Activated T-helper 1 cell treated with anti-CD3 and anti-CD28 coated beads, Interleukin-12 subunit alpha, Interleukin-12 subunit beta, Interleukin-2, Interleukin-4 antibody, amounts not matched to agents 30 ng/mL and 10 ng/mL and 1 ng/mL, durations not matched to agents 14 hours and 24 hours and 36 hours (primary cell): ENCODE measurements at regions of chr16 and their contacts with region 1.

Region 1: GRCh38 chr16:26598061-26598460 is 468.7 kb upstream of the C16orf82 start:
- DNase-seq: peak; percentile 84
- H3K4me3 Mint-ChIP-seq: peak overlapping the region; percentile 48
- H3K27ac Mint-ChIP-seq: peak overlapping the region; percentile 97
- H3K4me1 Mint-ChIP-seq: peaks cover 85% of the 10 kb centered on the region
- H3K27me3 Mint-ChIP-seq: no peaks in the 10 kb centered on the region

Region 2: DNA sequence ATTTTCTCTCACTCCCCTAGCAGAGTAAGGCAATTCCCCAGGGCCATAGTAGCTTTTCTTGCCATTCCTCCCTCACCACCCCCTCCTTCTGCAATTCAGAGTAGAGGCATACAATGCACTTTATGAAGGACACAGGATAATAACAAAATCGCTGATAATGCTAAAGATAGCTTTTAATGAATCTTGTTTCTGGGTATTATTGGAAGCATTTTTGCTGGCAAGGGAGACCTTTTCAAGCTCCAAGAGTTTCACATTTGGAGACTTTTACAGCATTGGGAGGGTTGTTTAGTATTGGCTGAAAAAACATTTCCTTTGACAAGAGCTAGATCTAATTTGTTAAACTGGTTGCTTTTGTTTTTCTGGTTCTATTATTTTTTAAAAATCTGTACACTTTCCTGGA is 104.3 kb before region 1 on chr16:
- intact Hi-C with region 1: no loop called
- DNase-seq: no peak
- H3K4me3 Mint-ChIP-seq: no peak overlapping the region
- H3K27ac Mint-ChIP-seq: no peak overlapping the region
- H3K4me1 Mint-ChIP-seq: peaks cover 7% of the 10 kb centered on the region
- H3K27me3 Mint-ChIP-seq: peaks cover 10% of the 10 kb centered on the region

Region 3: DNA sequence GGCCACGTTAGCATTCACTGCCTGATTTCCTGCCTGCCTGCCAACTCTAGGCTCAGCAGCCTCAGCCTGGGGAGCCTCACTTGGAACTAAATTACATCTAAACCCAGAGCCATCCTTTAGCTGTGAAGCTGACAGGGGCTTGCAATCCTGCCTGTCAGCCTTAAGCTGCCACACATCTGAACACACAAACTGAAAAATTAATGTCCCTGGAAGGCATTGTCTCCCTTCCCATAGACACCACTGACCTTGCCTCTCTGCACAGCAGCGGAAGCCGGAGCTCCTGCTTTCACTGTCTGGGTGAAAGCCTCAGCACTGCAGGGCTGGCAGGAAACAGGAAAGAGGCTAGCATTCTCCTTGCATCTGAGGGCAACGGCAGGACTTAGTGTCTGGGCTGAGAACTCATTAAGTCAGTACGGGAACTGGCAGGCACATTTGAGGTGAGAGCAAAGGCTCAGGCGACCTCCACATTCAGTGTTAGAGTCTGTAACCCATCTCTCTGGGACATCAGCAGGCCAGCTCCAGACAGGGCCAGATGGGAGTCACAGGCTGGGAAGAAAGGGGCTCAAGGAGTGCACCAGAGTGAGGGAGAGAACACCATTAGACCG is 16.3 kb after region 1 on chr16:
- intact Hi-C with region 1: loop called (anchors 2 kb)
- DNase-seq: peak; percentile 38
- H3K4me3 Mint-ChIP-seq: peak overlapping the region; percentile 86
- H3K27ac Mint-ChIP-seq: peak overlapping the region; percentile 91
- H3K4me1 Mint-ChIP-seq: peaks cover 58% of the 10 kb centered on the region
- H3K27me3 Mint-ChIP-seq: peaks cover 4% of the 10 kb centered on the region

Region 4: GRCh38 chr16:26645614-26646013 is 47.6 kb after region 1 on chr16:
- intact Hi-C with region 1: loop called (anchors 2 kb)
- DNase-seq: peak; percentile 57
- H3K4me3 Mint-ChIP-seq: no peak overlapping the region
- H3K27ac Mint-ChIP-seq: no peak overlapping the region
- H3K4me1 Mint-ChIP-seq: peaks cover 59% of the 10 kb centered on the region
- H3K27me3 Mint-ChIP-seq: peaks cover 2% of the 10 kb centered on the region

Region 5: DNA sequence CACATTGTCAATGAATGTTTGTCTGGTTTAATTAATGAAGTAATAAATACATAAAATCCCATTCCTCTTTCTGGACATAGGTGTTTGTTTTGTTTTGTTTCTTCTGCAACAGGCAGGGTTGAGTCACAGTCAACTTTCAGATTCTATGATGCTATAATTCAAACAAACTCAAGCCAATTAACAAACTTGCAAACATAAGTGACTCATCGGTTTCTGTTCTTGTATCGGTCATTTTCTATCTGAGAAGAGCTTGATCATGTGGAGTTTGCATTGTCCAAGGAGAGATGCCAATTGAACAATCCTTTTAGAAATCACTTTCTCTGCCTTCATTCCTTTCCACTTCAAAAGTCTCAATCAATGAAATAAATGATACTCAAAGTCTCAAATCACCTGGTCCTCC is 174.4 kb after region 1 on chr16:
- intact Hi-C with region 1: loop called (anchors 1 kb)
- DNase-seq: no peak
- H3K4me3 Mint-ChIP-seq: no peak overlapping the region
- H3K27ac Mint-ChIP-seq: peak overlapping the region; percentile 50
- H3K4me1 Mint-ChIP-seq: peaks cover 28% of the 10 kb centered on the region
- H3K27me3 Mint-ChIP-seq: no peaks in the 10 kb centered on the region